ENCODE measurements at regions of chr1 and their contacts with region 1.

Region 1: GRCh38 chr1:112358798-112359408 is 37.1 kb upstream of the CTTNBP2NL start:
- DNase-seq: no peak
- H3K4me3 ChIP-seq: no peak overlapping the region
- CTCF ChIP-seq: peak; percentile 91

Region 2: GRCh38 chr1:112344754-112345423 is 14.0 kb before region 1 on chr1:
- CTCF ChIA-PET with region 1: interaction called, 18 read pairs
- POLR2A ChIA-PET with region 1: no interaction called
- DNase-seq: no peak
- H3K4me3 ChIP-seq: no peak overlapping the region
- CTCF ChIP-seq: no peak

Region 3: GRCh38 chr1:112935461-112936289 is 576.8 kb after region 1 on chr1:
- CTCF ChIA-PET with region 1: no interaction called
- POLR2A ChIA-PET with region 1: no interaction called
- DNase-seq: no peak
- H3K4me3 ChIP-seq: no peak overlapping the region
- CTCF ChIP-seq: no peak

Measured in AG04449 (cell line).